ENCODE measurements at regions of chr12 and their contacts with region 1.

Region 1: GRCh38 chr12:57476162-57476992 is 3.3 kb downstream of the ARHGAP9 start:
- DNase-seq: peak; percentile 54
- ATAC-seq: peak; percentile 38
- H3K4me3 Mint-ChIP-seq: peak overlapping the region; percentile 93
- H3K27ac Mint-ChIP-seq: peak overlapping the region; percentile 100
- H3K4me1 Mint-ChIP-seq: peaks cover 80% of the 10 kb centered on the region
- H3K27me3 Mint-ChIP-seq: no peaks in the 10 kb centered on the region
- CTCF ChIP-seq: no peak

Region 2: DNA sequence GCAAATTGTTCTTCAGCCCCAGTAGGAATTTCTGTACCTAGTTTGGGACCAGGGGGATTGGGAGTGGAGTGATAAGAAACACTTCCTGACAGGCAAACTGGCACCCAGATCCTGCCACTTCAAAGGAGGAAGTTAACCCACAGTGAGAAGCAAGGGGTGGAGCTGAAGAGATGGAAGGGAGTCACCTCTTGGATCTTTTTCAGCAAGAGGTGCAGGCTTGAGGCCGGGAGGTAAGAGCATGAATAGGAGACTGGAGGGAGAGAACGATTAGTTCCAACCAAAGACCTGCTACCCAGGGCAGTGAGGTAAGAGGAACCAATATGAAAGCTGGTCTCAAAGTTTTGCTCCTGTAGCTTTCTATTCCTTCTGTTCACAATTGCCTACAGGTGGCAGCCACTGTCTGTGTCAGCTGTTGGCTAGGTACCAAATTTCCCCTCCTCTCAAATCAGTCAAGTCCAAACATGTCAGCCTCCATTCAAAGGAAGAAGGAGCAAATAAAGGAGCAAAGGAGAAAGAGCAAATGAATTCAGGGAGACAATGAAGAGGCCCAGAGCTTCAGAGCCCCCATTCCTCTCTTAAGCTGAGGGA is 445.1 kb before region 1 on chr12:
- CTCF ChIA-PET with region 1: no interaction called
- POLR2A ChIA-PET with region 1: no interaction called
- intact Hi-C with region 1: no loop called
- DNase-seq: no peak
- ATAC-seq: peak; percentile 69
- H3K4me3 Mint-ChIP-seq: no peak overlapping the region
- H3K27ac Mint-ChIP-seq: peak overlapping the region; percentile 72
- H3K4me1 Mint-ChIP-seq: peaks cover 14% of the 10 kb centered on the region
- H3K27me3 Mint-ChIP-seq: no peaks in the 10 kb centered on the region
- CTCF ChIP-seq: no peak

Region 3: DNA sequence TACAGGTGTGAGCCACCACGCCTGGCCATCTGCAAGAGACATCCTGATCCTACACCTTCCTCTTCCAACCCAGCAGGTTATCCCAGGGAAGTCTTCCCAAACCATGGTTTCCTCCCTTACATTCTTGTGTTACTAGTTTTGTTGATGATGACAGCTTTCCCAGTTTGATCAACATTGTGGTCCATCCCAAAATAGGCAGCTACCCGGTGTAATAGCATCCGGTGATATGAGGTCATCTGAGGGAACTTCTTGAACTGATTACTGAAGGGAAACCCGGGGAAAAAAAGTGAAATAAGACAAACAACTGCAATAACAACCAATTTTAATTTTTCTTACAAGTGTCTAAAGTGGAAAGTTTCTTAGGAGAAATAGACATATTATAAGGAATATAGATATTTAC is 180.1 kb before region 1 on chr12:
- CTCF ChIA-PET with region 1: no interaction called
- POLR2A ChIA-PET with region 1: no interaction called
- intact Hi-C with region 1: no loop called
- DNase-seq: no peak
- ATAC-seq: no peak
- H3K4me3 Mint-ChIP-seq: no peak overlapping the region
- H3K27ac Mint-ChIP-seq: no peak overlapping the region
- H3K4me1 Mint-ChIP-seq: peaks cover 4% of the 10 kb centered on the region
- H3K27me3 Mint-ChIP-seq: no peaks in the 10 kb centered on the region
- CTCF ChIP-seq: no peak

Region 4: GRCh38 chr12:57487597-57488401 is 11.4 kb after region 1 on chr12 and contains the start of gene MARS1:
- CTCF ChIA-PET with region 1: interaction called, 7 read pairs
- POLR2A ChIA-PET with region 1: interaction called, 19 read pairs
- intact Hi-C with region 1: loop called (anchors 1 kb)
- DNase-seq: peak; percentile 83
- ATAC-seq: peak; percentile 97
- H3K4me3 Mint-ChIP-seq: peak within 1 kb of the TSS; percentile 97
- H3K27ac Mint-ChIP-seq: peak within 1 kb of the TSS; percentile 97
- H3K4me1 Mint-ChIP-seq: peaks cover 41% of the 10 kb centered on the region
- H3K27me3 Mint-ChIP-seq: no peaks in the 10 kb centered on the region
- CTCF ChIP-seq: no peak
- total RNA-seq, gene MARS1: 368 and 425 TPM in 2 replicates

Measured in activated B cell treated with CpG ODN at 0.5 μM for 24 hours (primary cell).